PC-3 (cell line): ENCODE measurements at regions of chr7 and their contacts with region 1.

Region 1: GRCh38 chr7:44944821-44945220 is 34.0 kb downstream of the MYO1G start:
- DNase-seq: no peak
- ATAC-seq: no peak
- H3K4me3 ChIP-seq: no peak overlapping the region
- H3K27ac ChIP-seq: no peak overlapping the region
- H3K4me1 ChIP-seq: no peaks in the 10 kb centered on the region
- H3K27me3 ChIP-seq: no peaks in the 10 kb centered on the region
- CTCF ChIP-seq: no peak

Region 2: DNA sequence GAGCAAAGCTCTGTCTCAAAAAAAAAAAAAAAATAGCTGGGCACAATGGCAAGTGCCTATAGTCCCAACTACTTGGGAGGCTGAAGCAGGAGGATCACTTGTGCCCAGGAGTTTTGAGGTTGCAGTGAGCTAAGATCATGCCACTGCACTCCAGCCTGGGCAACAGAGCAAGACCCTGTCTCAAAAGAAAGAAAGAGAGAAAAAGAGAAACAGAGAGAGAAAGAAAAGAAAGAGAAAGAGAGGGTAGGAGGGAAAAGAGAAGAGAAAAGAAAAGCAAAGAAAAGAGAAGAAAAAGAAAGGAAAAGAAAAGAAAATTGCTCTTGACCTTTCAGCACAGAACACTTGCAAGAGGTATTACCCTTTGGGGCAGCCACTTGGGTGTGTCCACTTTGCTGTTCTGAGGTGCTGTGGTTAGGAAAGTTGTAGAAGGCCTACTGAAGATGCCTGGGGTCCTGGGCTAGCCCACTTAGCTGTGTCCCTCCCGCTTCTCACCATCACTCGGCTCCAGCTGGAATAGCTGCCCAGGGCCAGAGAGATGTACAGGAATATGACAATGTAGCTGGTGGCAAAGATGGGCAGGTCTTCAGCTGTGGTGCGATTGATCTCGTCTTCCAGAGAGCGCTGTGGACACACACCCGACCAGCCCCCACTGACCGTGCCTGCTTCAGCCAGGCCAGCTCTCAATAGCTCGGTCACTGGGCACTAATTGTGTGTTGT is 409.3 kb before region 1 on chr7:
- CTCF ChIA-PET with region 1: interaction called, 10 read pairs
- POLR2A ChIA-PET with region 1: no interaction called
- intact Hi-C with region 1: no loop called
- DNase-seq: no peak
- ATAC-seq: no peak
- H3K4me3 ChIP-seq: no peak overlapping the region
- H3K27ac ChIP-seq: no peak overlapping the region
- H3K4me1 ChIP-seq: no peaks in the 10 kb centered on the region
- H3K27me3 ChIP-seq: no peaks in the 10 kb centered on the region
- CTCF ChIP-seq: no peak